ENCODE measurements at regions of chr19 and their contacts with region 1.

Region 1: GRCh38 chr19:23395041-23395721 is at the start of gene ZNF91:
- DNase-seq: peak; percentile 96 to 98
- ATAC-seq: peak; percentile 98
- H3K4me3 ChIP-seq: peak within 1 kb of the TSS; percentile 70 to 94 (median 86)
- H3K27ac ChIP-seq: peak within 1 kb of the TSS; percentile 88 to 98 (median 94)
- H3K4me1 ChIP-seq: peaks cover 33% of the 10 kb centered on the region in 2 donors
- H3K27me3 ChIP-seq: no peaks in the 10 kb centered on the region
- CTCF ChIP-seq: no peak
- POLR2A ChIP-seq: peak; percentile 76 to 88
- total RNA-seq, gene ZNF91: 44.3 to 71.1 (median 59.0) TPM

Region 2: GRCh38 chr19:23273590-23274413 is 121.4 kb before region 1 on chr19:
- in situ Hi-C with region 1: loop called in 1 of 4 experiments (anchors 25 kb)
- intact Hi-C with region 1: loop called (anchors 2 kb)
- DNase-seq: peak; percentile 71 to 88
- ATAC-seq: peak; percentile 97 to 100
- H3K4me3 ChIP-seq: peak overlapping the region; percentile 83 to 98 (median 92)
- H3K27ac ChIP-seq: peak overlapping the region; percentile 78 to 88 (median 85)
- H3K4me1 ChIP-seq: peaks cover 0 to 5% of the 10 kb centered on the region in 2 donors
- H3K27me3 ChIP-seq: no peaks in the 10 kb centered on the region
- CTCF ChIP-seq: no peak
- POLR2A ChIP-seq: peak; percentile 52 to 78

Region 3: GRCh38 chr19:23686621-23687423 is 291.6 kb after region 1 on chr19 and contains the start of gene ZNF675:
- in situ Hi-C with region 1: no loop called
- intact Hi-C with region 1: loop called (anchors 2 kb)
- DNase-seq: peak; percentile 81 to 86
- ATAC-seq: peak; percentile 93 to 97
- H3K4me3 ChIP-seq: peak within 1 kb of the TSS; percentile 54 to 74 (median 66)
- H3K27ac ChIP-seq: peak within 1 kb of the TSS; percentile 50 to 74 (median 65)
- H3K4me1 ChIP-seq: peaks cover 0 to 7% of the 10 kb centered on the region in 2 donors
- H3K27me3 ChIP-seq: no peaks in the 10 kb centered on the region
- CTCF ChIP-seq: no peak
- POLR2A ChIP-seq: no peak
- total RNA-seq, gene ZNF675: 1.2 to 2.5 (median 1.5) TPM